Right ventricle myocardium inferior (tissue), 1 donor: ENCODE measurements at regions of chr10 and their contacts with region 1.

Region 1: DNA sequence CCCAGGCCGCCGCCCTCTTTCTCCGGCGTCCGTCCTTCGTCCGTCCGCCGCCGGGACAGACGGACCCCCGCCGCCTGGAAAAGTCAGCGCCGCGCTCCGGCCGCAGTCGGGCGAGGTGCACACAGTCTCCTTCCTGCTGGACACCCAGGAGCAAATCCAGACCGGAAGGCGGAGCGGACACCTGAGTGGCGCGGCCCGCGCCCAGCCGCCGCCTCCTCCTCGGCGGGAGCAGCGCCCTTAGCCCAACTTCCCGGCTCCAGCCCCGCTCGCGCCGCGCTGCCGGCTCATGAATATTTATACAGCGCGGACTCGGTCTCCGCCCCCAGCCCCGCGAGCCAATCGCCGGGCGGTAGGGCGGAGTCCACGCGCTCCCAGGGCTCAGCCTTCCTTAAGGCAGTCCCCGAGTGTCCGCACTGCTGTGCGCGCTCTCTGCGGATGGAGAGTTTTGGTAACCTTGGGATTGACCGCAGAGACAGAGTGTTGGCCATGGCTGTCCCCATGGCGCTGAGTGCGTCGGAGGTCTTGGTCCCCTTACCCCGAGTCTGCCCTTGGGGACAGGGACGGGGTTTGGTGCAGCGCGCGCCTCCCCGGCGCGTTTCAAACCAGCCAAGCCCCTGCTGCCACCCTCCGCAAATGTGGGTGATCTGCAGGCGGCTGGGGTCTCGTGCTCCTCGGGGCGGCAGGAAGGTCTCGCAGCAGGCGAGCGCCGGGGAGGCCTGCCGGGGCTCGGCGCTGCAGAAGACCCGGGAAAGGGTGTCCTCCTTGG is at the start of gene FZD8:
- DNase-seq: peak; percentile 95
- ATAC-seq: peak; percentile 95
- total RNA-seq, gene FZD8: 9.0 TPM

Region 2: DNA sequence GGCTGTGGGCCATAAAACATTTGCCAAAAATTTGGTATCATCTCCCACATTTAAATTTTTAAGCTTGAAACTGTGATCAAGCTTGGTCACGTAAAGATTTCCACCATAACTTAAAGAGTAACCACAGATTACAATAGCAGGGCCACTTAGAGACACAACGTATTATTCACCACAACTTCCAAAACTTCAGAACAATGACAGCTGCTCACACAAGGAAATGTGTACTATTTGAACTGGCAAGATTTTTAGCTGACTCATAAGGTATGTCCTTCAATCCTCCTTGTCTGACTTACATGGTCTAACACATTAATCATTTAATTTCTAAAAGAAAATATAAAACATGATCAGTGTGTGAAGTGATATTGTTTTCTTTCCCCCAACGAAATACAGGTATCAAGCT is 1061.6 kb before region 1 on chr10:
- intact Hi-C with region 1: no loop called
- DNase-seq: no peak
- ATAC-seq: no peak

Region 3: DNA sequence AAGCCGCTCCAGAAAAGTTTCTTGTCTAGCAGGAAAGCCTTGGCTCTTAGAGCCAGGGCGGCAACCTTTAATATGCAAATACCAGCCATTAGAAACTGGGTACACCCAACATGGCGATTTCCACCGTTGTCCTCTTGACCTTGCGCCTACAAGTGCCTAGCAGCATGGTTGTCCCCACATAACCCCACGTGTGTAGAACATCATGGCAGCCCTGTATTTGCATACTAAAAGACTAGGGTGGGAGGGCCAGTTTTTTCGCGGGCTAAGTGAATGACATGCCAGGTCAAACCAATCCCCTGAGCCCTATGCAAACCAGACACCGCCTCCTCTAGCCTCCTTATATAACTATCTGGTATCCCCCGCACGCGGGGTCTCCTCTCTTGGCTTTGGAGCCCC is 58.3 kb after region 1 on chr10:
- intact Hi-C with region 1: no loop called
- DNase-seq: no peak
- ATAC-seq: no peak

Region 4: DNA sequence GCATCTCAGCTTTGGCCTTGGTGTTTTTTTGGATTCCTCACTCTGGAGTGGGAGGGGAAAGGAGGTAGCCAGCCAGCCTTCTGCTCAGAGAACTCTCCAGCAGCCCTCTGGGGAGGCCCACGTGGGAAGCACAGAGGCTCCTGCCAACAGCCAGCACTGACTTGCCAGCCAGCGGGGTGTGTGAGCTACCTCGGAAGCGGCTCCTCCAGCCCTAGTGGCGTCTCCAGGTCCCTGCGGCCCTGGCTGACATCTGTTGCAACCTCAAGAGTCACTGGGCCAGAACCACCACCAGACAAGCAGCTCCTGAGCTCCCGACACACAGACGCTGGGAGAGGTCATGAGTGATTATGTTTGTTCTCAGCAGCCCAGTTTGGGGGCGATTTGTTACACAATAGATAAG is 180.1 kb after region 1 on chr10:
- intact Hi-C with region 1: loop called (anchors 2 kb)
- DNase-seq: peak; percentile 90
- ATAC-seq: peak; percentile 98

Region 5: DNA sequence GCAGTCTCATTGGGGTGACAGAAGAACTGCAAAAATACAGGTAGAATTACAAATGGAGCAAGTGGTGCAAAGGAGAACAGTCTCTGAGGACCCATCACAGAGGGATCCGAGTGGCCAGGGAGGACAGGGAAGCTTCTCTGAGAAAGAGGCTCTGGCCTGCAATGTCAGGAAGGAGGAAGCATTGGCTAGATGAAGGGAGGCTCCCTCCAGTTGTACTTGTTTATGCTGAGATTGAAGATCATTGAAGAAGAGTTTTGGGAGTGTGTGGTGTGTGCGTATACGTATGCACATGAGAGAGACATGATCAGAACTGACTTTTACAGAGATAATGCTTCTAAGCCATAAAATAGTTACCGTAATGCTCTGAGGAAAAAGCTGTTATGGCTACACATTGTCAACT is 274.6 kb after region 1 on chr10:
- intact Hi-C with region 1: loop called (anchors 5 kb)
- DNase-seq: no peak
- ATAC-seq: peak; percentile 31

Region 6: DNA sequence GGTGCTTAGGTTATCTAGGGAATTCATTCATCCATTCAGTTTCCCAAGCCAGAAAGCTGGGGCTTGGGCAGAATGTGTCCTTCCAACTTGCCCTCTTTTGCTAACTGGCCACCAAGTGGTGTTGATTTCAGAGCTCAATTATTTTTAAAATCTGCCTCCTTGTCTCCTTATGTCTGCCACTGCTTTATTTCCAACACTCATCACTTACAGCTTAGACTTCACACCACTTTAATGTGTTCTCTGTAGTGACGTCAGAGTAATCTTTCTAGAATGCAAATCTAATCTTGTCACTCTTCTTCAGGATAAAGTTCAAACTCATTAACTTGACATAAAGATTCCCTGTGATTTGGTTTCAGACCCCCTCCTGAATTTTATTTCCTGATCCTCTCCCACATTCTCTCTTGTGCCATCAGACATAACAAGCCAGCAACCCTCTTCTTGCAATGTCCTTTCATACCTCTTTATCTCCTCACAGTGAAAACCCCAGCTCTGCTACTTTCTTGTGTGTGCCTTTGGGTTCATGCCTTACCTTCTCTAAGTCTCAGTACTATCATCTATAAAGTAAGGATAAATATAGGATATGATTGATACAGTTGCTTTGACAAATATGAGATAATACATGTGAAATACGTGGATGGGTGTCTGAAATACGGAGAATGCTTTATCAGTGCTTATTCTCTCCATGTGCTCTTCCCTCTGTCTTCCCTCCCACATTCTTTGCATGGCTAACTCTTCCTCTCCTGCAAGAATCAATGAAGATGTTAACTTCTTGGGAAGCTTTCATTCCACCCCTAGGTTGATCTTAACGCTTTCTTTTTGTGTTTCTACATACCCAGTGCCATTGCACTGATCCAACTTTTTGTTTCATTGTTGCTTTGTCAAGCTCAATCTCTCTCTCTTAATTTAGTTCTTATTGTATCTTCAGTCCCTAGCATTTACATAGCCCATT is 522.6 kb after region 1 on chr10:
- intact Hi-C with region 1: loop called (anchors 5 kb)
- DNase-seq: no peak
- ATAC-seq: peak; percentile 88

Region 7: DNA sequence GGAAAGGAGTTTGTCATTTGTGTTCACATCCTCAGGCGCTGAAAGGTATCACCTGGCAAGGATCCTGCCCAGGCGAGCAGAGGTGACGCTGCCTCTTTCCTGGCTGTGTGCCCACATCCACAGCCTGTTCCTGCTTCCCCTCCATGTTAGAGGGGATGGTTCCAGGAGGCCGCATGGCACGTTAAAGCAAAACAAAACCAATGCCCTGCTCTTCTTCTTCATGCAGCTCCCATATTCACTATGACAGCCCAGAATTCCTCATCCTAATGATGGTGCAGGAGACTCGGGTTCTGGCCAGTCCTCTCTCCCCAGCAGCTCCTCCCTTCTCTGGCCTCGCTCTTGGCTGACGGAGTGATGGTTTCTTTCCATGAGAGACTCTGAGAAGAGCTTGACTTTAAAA is 804.7 kb after region 1 on chr10:
- intact Hi-C with region 1: loop called (anchors 2 kb)
- DNase-seq: peak; percentile 75
- ATAC-seq: peak; percentile 83